PC-3 (cell line): ENCODE measurements at regions of chr12 and their contacts with region 1.

Region 1: DNA sequence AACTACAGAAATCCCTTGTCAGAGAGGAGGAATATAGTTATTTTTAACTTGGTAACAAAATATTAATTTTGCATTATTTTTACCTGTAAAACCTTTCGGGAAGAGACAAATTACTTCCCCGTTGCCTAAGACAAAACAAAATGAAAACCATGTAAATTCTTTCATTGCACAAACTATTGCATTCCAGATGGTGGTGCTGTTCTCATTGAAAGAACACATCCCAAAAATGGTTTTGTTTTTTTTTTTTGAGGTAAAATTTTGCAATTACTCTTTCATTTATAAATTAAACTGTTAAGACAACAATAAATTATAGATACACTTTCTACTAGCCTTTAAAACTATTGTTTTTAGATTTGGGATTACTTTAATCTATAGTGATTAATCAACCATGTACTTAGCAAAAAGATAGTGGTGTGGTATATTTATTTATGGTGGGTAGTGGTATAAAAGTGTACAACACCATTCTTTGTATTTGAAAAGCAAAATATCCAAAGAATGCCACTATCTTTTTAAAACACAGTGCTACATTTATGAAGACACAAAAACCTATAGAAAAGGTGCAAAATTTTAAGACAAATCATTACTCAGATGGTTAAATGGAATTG is 115.5 kb downstream of the SLC38A1 start:
- DNase-seq: peak; percentile 56
- ATAC-seq: no peak
- H3K4me3 ChIP-seq: no peak overlapping the region; the same call in 1 of the 2 replicates
- H3K27ac ChIP-seq: no peak overlapping the region
- H3K4me1 ChIP-seq: peaks cover 29% of the 10 kb centered on the region
- H3K27me3 ChIP-seq: no peaks in the 10 kb centered on the region
- CTCF ChIP-seq: peak; percentile 90

Region 2: DNA sequence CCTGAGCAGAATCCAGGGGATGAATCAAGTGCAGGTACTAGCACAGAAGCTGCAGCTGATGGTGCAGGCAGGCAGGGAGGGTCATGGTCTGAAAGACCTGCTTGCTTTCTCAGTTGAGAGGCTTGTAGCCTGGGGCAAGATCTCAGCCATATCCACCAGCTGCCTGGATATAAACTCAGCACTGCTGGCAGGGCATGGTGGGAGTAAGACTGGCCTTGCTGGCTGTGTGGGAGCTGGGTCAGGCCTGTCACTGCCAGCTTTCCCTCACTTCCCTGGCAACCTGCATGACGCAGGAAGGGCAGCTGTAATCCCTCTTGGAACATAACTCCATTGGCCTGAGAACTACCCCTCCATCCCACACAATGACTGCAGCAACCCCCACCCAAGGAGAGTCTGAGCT is 707.4 kb before region 1 on chr12:
- CTCF ChIA-PET with region 1: no interaction called
- POLR2A ChIA-PET with region 1: no interaction called
- intact Hi-C with region 1: no loop called
- DNase-seq: no peak
- ATAC-seq: no peak
- H3K4me3 ChIP-seq: no peak overlapping the region
- H3K27ac ChIP-seq: no peak overlapping the region
- H3K4me1 ChIP-seq: no peaks in the 10 kb centered on the region
- H3K27me3 ChIP-seq: no peaks in the 10 kb centered on the region
- CTCF ChIP-seq: no peak

Region 3: DNA sequence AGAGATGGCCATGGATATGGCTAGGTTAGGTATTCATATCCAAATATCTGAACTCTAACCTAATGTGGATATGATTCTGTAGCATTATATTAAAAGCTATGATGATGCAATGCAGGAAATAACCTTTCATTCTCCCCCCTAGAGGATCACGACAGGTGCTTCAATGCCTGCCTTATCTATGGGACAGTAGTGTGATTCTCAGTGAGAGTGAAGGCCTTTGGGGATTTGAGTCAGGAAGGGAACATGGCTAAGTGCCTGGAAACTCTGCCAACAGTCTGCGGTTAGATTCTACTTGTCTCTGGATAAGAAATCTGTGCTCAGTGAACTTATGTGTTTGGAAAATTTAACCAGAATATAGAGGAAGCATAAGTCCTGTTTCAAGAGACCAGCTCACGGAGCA is 33.7 kb after region 1 on chr12:
- CTCF ChIA-PET with region 1: no interaction called
- POLR2A ChIA-PET with region 1: interaction called, 3 read pairs
- intact Hi-C with region 1: loop called (anchors 5 kb)
- DNase-seq: peak; percentile 71
- ATAC-seq: peak; percentile 42
- H3K4me3 ChIP-seq: no peak overlapping the region
- H3K27ac ChIP-seq: no peak overlapping the region
- H3K4me1 ChIP-seq: no peaks in the 10 kb centered on the region
- H3K27me3 ChIP-seq: no peaks in the 10 kb centered on the region
- CTCF ChIP-seq: no peak

Region 4: DNA sequence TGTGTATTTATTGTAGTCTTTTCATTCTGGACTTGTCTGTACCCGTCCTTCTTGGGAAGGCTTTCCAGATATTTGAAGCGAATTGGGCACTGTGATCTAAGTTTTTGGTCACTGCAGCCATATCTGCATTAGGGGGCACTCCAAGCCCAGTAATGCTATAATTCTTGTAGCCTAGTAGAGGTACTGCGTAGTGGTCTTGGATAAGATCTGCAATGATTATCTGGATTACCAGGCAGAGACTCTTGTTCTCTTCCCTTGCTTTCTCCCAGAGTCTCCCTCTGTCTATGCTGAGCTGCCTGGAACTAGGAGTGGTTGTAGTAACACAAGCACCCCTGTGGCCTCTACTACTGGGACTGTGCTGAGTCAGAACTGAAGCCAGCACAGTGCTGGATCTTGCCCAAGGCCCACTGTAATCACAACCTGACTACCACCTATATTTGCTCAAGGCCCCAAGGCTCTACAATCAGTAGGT is 189.2 kb after region 1 on chr12:
- CTCF ChIA-PET with region 1: no interaction called
- POLR2A ChIA-PET with region 1: no interaction called
- intact Hi-C with region 1: no loop called
- DNase-seq: peak; percentile 73
- ATAC-seq: peak; percentile 91
- H3K4me3 ChIP-seq: no peak overlapping the region
- H3K27ac ChIP-seq: peak overlapping the region; percentile 43
- H3K4me1 ChIP-seq: peaks cover 13% of the 10 kb centered on the region
- H3K27me3 ChIP-seq: no peaks in the 10 kb centered on the region
- CTCF ChIP-seq: peak; percentile 65

Region 5: GRCh38 chr12:46357438-46358324 is 204.3 kb after region 1 on chr12:
- CTCF ChIA-PET with region 1: no interaction called
- POLR2A ChIA-PET with region 1: no interaction called
- intact Hi-C with region 1: loop called (anchors 5 kb)
- DNase-seq: peak; percentile 39
- ATAC-seq: peak; percentile 46
- H3K4me3 ChIP-seq: no peak overlapping the region
- H3K27ac ChIP-seq: no peak overlapping the region
- H3K4me1 ChIP-seq: no peaks in the 10 kb centered on the region
- H3K27me3 ChIP-seq: no peaks in the 10 kb centered on the region
- CTCF ChIP-seq: no peak

Region 6: GRCh38 chr12:46661110-46661845 is 507.9 kb after region 1 on chr12:
- CTCF ChIA-PET with region 1: no interaction called
- POLR2A ChIA-PET with region 1: no interaction called
- intact Hi-C with region 1: loop called (anchors 10 kb)
- DNase-seq: peak; percentile 80
- ATAC-seq: peak; percentile 53
- H3K4me3 ChIP-seq: no peak overlapping the region
- H3K27ac ChIP-seq: peak overlapping the region; percentile 56
- H3K4me1 ChIP-seq: peaks cover 57% of the 10 kb centered on the region
- H3K27me3 ChIP-seq: no peaks in the 10 kb centered on the region
- CTCF ChIP-seq: peak; percentile 87